ENCODE measurements at regions of chr12 and their contacts with region 1.

Region 1: DNA sequence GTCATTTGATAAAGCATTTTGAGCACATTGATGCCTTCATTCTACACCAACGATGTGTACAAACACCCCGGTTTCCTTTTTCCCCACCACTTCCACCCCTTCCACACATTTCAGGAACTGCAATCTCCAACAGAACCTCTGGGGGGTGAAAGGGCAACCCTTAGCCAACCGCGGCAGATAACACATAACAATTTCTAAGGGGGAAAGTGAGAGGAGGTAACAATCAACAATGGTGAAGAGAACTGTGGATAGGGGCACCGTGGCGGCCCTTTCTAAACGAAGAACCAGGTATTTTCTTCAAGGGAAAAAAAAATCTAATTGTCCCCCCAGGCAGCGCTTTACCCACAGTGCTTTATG is 1.1 kb downstream of the KITLG start:
- DNase-seq: no peak
- ATAC-seq: no peak
- H3K4me3 ChIP-seq: peak overlapping the region; percentile 65 to 74
- H3K27ac ChIP-seq: no peak overlapping the region
- H3K4me1 ChIP-seq: peaks cover 1 to 5% of the 10 kb centered on the region in 2 donors
- H3K27me3 ChIP-seq: no peaks in the 10 kb centered on the region

Region 2: GRCh38 chr12:88993651-88994050 is 414.5 kb after region 1 on chr12:
- intact Hi-C with region 1: loop called in 1 of 2 experiments (anchors 10 kb)
- DNase-seq: no peak
- ATAC-seq: no peak
- H3K4me3 ChIP-seq: no peak overlapping the region
- H3K27ac ChIP-seq: no peak overlapping the region
- H3K4me1 ChIP-seq: no peaks in the 10 kb centered on the region
- H3K27me3 ChIP-seq: no peaks in the 10 kb centered on the region